ENCODE measurements at regions of chr4 and their contacts with region 1.

Region 1: GRCh38 chr4:177250056-177250696 is 59.5 kb upstream of the NEIL3 start:
- DNase-seq: peak; percentile 59
- ATAC-seq: peak; percentile 99
- H3K4me3 ChIP-seq: peak overlapping the region in 1 of 2 experiments; percentile 31; a peak in 2 of 4 replicates
- H3K27ac ChIP-seq: no peak overlapping the region
- H3K4me1 ChIP-seq: peaks cover 0 to 4% of the 10 kb centered on the region in 2 experiments; a peak in 2 of 4 replicates
- H3K27me3 ChIP-seq: no peaks in the 10 kb centered on the region
- CTCF ChIP-seq: peak; percentile 74 to 99 (median 98)
- POLR2A ChIP-seq: no peak
- RAD21 ChIP-seq: peak; percentile 99

Region 2: DNA sequence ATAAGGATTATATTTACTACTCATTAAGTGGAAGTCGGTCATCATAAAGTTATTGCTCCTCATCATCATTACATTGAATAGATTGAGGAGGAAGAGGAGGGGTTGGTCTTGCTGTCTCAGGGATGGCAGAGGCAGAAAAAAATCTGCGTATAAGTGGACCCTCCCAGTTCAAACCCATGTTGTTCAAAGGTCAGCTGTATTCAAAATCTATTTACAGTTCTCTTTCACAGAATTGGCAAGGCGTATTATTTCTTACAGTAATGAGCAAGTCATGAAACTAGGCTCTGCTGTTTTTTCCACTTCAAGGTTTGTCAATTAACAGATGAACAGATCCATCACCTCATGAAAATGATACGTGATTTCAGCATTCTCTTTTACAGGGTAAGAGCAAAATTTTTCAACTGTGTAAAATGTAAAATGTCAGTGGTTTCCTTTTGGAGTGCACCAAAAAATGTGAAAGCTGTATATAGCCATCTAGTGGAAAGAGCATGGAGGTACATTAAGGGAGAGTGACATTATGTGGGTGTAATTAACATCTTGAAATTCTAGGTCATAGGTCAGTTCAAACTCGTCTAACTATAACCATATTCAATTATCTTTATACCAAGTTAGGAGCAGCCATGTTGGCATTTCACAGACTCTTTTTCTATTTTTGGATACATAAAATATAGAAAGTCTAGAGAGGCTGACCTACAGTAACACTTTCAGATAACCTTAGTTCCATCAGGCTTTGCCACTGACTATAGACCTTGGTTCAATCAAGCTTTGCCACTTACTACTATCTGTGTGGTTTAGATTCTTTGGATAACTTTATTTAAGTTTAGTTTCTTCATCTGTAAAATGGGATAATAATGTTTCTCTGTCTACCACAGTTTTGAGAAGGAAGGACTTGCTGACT is 89.5 kb after region 1 on chr4:
- CTCF ChIA-PET with region 1: interaction called, 10 read pairs
- POLR2A ChIA-PET with region 1: no interaction called
- RAD21 ChIA-PET with region 1: no interaction called
- intact Hi-C with region 1: loop called (anchors 1 kb)
- DNase-seq: peak; percentile 4
- ATAC-seq: peak; percentile 78
- H3K4me3 ChIP-seq: no peak overlapping the region
- H3K27ac ChIP-seq: no peak overlapping the region
- H3K4me1 ChIP-seq: no peaks in the 10 kb centered on the region
- H3K27me3 ChIP-seq: no peaks in the 10 kb centered on the region
- CTCF ChIP-seq: peak; percentile 51 to 62 (median 52); a peak in 5 of 6 replicates
- POLR2A ChIP-seq: no peak
- RAD21 ChIP-seq: peak; percentile 60

Measured in HCT116 (cell line).